CD4-positive, alpha-beta memory T cell (primary cell): ENCODE measurements at regions of chr12 and their contacts with region 1.

Region 1: DNA sequence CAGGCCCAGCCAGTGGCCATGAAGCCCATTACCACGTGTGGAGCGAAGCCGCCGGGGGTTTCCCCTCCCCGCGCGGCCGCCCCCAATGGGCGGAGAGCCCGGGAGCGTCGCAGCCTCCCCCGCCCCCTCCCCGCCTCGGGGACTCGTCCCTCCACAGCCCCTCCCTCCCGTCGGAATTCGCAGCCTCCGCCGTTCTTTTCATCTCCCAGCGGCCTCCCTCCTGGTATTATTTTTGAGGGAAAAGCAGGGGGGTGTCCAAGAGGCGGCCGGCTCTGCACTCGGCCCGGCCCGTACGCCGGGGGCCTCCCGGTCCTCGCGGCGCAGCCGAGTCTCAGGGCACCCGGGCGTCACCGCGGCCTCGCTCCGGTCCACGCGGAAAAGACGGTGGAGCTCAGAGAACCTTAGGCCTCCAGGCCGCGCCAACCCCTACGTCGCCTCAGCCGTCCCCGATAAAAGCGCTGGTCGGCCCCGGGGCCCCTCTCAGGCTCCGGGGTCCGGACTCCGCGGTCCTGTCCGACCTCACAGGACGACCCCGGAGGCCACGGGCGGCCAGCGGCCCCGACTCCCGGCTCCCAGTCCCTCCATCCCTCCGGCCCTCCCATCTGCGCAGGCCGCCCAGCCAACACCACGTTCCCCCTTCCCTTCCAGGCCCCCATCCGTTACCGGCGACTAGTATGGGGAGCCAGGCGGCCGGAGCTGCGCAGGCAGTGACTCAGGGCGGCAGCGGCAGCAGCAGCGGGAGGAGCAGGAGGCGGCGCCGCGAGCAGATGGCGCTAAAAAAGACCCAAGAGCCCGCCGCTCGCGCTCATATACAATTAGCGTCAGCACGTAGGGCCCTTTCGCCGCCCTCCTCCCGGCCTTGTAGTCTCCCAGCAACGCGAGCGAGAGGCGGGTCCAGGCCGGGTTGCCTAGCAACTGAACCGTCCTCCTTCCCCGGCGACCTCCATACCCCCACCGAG is at the start of gene NAP1L1:
- DNase-seq: peak; percentile 94 to 97 (median 96)
- H3K4me3 ChIP-seq: peak within 1 kb of the TSS; percentile 38 to 85
- H3K4me3 Mint-ChIP-seq: peak within 1 kb of the TSS; percentile 93 to 100 (median 98)
- H3K27ac ChIP-seq: peak within 1 kb of the TSS; percentile 100
- H3K27ac Mint-ChIP-seq: peak within 1 kb of the TSS; percentile 99 to 100 (median 100)
- H3K4me1 ChIP-seq: peaks cover 53% of the 10 kb centered on the region
- H3K4me1 Mint-ChIP-seq: peaks cover 33 to 68% (median 44%) of the 10 kb centered on the region in 4 donors
- H3K27me3 ChIP-seq: no peaks in the 10 kb centered on the region
- H3K27me3 Mint-ChIP-seq: peaks cover 0 to 2% of the 10 kb centered on the region in 2 donors
- total RNA-seq, gene NAP1L1: 673 to 718 TPM

Region 2: DNA sequence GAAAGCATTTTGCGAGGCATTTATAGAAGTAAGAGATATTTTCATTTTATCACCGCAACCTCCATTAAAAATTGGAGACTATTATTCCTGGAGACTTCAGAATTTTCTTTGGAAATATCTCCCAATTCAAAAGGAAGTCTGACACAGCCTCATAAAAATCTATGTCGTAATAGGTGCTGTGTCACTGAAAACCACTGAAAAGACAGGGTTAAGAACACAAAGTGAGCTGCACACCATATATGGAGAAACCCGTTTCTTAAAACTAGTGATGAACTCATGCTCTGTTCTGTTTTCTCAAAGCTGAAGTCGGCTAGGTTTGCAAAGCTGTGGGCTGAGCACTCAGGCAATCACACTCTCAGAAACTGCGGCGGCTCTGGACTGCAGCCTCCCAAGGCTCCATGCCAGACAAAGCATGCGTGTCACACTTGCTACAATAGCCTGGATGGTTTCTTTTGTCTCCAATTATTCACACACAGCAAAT is 603.7 kb before region 1 on chr12 and contains the start of gene GLIPR1:
- CTCF ChIA-PET with region 1: interaction called, 4 read pairs
- POLR2A ChIA-PET with region 1: interaction called, 11 read pairs
- intact Hi-C with region 1: loop called (anchors 1 kb)
- DNase-seq: peak; percentile 78 to 85 (median 83)
- H3K4me3 ChIP-seq: peak within 1 kb of the TSS; percentile 74 to 84
- H3K4me3 Mint-ChIP-seq: peak within 1 kb of the TSS; percentile 92 to 99 (median 97)
- H3K27ac ChIP-seq: peak within 1 kb of the TSS; percentile 72
- H3K27ac Mint-ChIP-seq: peak within 1 kb of the TSS; percentile 98 to 100 (median 99)
- H3K4me1 ChIP-seq: peaks cover 77% of the 10 kb centered on the region
- H3K4me1 Mint-ChIP-seq: peaks cover 60 to 85% (median 70%) of the 10 kb centered on the region in 4 donors
- H3K27me3 ChIP-seq: no peaks in the 10 kb centered on the region
- H3K27me3 Mint-ChIP-seq: peaks cover 0 to 2% of the 10 kb centered on the region in 2 donors
- total RNA-seq, gene GLIPR1: 96.1 to 99.8 TPM

Region 3: GRCh38 chr12:76020731-76021672 is 63.2 kb before region 1 on chr12:
- CTCF ChIA-PET with region 1: no interaction called
- POLR2A ChIA-PET with region 1: interaction called, 10 read pairs
- intact Hi-C with region 1: loop called (anchors 2 kb)
- DNase-seq: peak; percentile 79 to 90 (median 82)
- H3K4me3 ChIP-seq: no peak overlapping the region
- H3K4me3 Mint-ChIP-seq: peak overlapping the region; percentile 38 to 81 (median 56)
- H3K27ac ChIP-seq: peak overlapping the region; percentile 77
- H3K27ac Mint-ChIP-seq: peak overlapping the region; percentile 95 to 99 (median 97)
- H3K4me1 ChIP-seq: peaks cover 26% of the 10 kb centered on the region
- H3K4me1 Mint-ChIP-seq: peaks cover 18 to 45% (median 34%) of the 10 kb centered on the region in 4 donors
- H3K27me3 ChIP-seq: no peaks in the 10 kb centered on the region
- H3K27me3 Mint-ChIP-seq: no peaks in the 10 kb centered on the region

Region 4: GRCh38 chr12:76101739-76102385 is 17.7 kb after region 1 on chr12:
- CTCF ChIA-PET with region 1: no interaction called
- POLR2A ChIA-PET with region 1: no interaction called
- intact Hi-C with region 1: no loop called
- DNase-seq: no peak
- H3K4me3 ChIP-seq: no peak overlapping the region
- H3K4me3 Mint-ChIP-seq: no peak overlapping the region
- H3K27ac ChIP-seq: no peak overlapping the region
- H3K27ac Mint-ChIP-seq: no peak overlapping the region
- H3K4me1 ChIP-seq: no peaks in the 10 kb centered on the region
- H3K4me1 Mint-ChIP-seq: no peaks in the 10 kb centered on the region
- H3K27me3 ChIP-seq: no peaks in the 10 kb centered on the region
- H3K27me3 Mint-ChIP-seq: peaks cover 5 to 7% of the 10 kb centered on the region in 2 donors

Region 5: DNA sequence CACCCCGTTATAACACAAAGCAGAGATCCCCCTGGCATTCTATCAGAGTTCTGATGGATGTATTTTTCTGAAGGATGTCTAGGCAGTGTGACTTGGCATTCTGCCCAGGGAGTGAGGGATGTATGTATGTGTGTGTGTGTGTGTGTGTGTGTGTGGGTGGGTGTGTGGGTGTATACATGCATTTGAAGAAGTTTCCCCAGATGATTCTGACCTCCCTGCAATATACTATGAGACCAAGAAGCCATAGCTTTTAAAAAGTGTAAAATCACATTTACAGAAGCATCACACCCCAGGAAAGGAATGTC is 60.0 kb after region 1 on chr12:
- CTCF ChIA-PET with region 1: no interaction called
- POLR2A ChIA-PET with region 1: no interaction called
- intact Hi-C with region 1: loop called (anchors 5 kb)
- DNase-seq: peak; percentile 35 to 53 (median 45)
- H3K4me3 ChIP-seq: no peak overlapping the region
- H3K4me3 Mint-ChIP-seq: peak overlapping the region in 5 of 8 donors; percentile 1 to 71 (median 6)
- H3K27ac ChIP-seq: no peak overlapping the region
- H3K27ac Mint-ChIP-seq: peak overlapping the region in 4 of 7 donors; percentile 1 to 54 (median 16)
- H3K4me1 ChIP-seq: peaks cover 17% of the 10 kb centered on the region
- H3K4me1 Mint-ChIP-seq: peaks cover 17 to 25% (median 21%) of the 10 kb centered on the region in 4 donors
- H3K27me3 ChIP-seq: no peaks in the 10 kb centered on the region
- H3K27me3 Mint-ChIP-seq: no peaks in the 10 kb centered on the region

Region 6: DNA sequence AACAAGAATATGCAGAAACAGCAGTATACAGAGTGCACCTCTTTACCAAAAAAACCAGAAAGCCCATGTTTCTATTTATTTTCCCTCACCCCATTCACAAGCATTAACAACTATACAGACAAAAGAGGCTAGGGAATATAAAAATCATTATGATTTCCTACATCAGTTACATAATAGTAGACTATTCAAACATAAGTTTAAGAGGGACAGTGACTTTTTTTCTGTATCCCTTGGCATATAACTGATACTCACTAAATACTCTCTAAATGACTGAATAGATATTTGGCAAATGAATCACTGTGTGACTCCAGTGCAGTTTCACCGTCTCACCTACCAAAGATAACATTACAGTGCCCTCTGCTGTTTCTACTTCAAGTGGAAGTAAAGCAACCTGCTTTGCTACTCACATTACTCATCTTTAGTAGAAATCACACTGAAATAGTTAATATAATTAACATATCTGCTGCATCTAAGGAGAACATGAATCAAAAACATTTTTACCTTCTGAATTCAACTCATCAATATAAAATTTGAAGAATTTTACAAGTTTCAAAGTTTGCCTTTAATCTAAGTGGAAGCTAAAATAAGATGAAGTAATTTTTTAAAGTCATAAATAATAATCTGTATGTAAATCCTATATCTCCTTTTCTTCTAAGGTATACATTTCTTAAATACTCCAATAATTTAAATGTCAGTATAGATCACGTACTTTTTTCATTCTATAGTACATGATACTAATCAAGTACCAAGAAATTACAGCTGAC is 371.6 kb after region 1 on chr12:
- CTCF ChIA-PET with region 1: interaction called, 8 read pairs
- POLR2A ChIA-PET with region 1: interaction called, 11 read pairs
- intact Hi-C with region 1: loop called (anchors 2 kb)
- DNase-seq: peak in 4 of 5 donors; percentile 44 to 56 (median 51)
- H3K4me3 ChIP-seq: no peak overlapping the region
- H3K4me3 Mint-ChIP-seq: no peak overlapping the region
- H3K27ac ChIP-seq: no peak overlapping the region
- H3K27ac Mint-ChIP-seq: peak overlapping the region in 5 of 7 donors; percentile 30 to 88 (median 75)
- H3K4me1 ChIP-seq: peaks cover 42% of the 10 kb centered on the region
- H3K4me1 Mint-ChIP-seq: peaks cover 26 to 55% (median 33%) of the 10 kb centered on the region in 4 donors
- H3K27me3 ChIP-seq: no peaks in the 10 kb centered on the region
- H3K27me3 Mint-ChIP-seq: no peaks in the 10 kb centered on the region

Region 7: GRCh38 chr12:76763743-76764675 is 679.8 kb after region 1 on chr12 and contains the start of gene ZDHHC17:
- CTCF ChIA-PET with region 1: no interaction called
- POLR2A ChIA-PET with region 1: interaction called, 3 read pairs
- intact Hi-C with region 1: loop called (anchors 1 kb)
- DNase-seq: peak; percentile 92 to 94 (median 93)
- H3K4me3 ChIP-seq: peak within 1 kb of the TSS; percentile 54 to 78
- H3K4me3 Mint-ChIP-seq: peak within 1 kb of the TSS; percentile 97 to 98 (median 98)
- H3K27ac ChIP-seq: peak within 1 kb of the TSS; percentile 90
- H3K27ac Mint-ChIP-seq: peak within 1 kb of the TSS; percentile 95 to 99 (median 98)
- H3K4me1 ChIP-seq: peaks cover 36% of the 10 kb centered on the region
- H3K4me1 Mint-ChIP-seq: peaks cover 21 to 53% (median 35%) of the 10 kb centered on the region in 4 donors
- H3K27me3 ChIP-seq: no peaks in the 10 kb centered on the region
- H3K27me3 Mint-ChIP-seq: no peaks in the 10 kb centered on the region
- total RNA-seq, gene ZDHHC17: 51.5 to 52.9 TPM